ENCODE measurements at regions of chr22 and their contacts with region 1.

Region 1: DNA sequence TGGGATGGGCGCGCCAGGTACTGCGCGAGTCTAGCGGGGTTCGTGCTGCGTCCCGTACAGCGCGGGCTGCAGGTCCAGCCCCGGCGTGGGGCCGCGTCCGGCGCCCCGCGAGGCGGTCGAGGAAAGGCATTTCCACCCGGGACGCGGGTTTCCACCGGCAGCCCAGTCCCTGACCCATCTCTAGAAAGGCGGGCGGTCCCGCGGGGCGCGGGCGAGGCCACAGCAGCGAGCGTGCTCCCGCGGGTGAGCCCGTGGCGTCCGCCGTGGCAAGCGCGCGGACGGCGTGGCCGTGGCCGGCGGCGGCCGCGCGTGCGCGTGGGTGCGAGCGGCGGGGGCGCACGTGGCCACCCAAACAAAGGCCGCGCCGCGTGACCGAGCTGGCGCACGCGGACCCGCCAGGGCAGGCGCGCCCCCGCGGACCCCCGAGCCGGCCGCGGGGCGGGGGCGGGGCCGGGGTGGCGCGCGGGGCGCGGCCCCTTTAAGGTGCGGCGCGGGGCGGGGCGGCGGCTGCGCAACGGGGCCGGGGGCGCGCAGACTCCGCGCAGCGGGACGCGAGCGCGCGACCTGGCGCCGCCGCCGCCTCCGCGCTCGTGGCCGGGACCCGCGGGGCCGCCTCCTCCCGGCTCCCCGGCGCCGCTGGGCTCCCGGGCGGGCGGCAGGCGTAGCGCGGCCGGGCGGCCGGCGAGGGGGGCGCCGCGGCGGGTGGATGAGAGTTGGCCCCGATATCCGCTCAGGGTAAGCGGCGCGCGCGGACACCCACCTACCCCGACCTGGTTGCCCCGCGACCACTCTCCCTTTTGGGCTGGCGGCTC is 39.3 kb upstream of the CELSR1 start:
- DNase-seq: peak; percentile 73
- ATAC-seq: peak; percentile 29

Region 2: DNA sequence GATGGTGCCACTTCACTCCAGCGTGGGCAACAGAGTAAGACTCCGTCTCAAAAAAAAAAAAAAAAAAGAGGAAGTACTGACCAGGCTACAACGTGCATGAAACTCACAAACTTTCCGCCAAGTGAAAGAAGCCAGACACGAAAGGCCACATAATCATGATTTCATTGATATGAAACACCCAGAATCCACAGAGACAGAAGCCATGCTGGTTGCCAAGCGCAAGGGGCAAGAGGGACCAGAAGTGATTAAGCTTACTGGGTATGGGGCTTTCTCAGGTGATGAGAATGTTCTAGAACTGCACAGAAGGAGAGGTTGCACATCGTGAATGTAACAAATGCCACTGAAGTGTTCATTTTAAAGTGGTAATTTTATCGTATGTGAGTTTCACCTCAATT is 100.2 kb before region 1 on chr22:
- intact Hi-C with region 1: no loop called
- DNase-seq: no peak
- ATAC-seq: no peak

Region 3: GRCh38 chr22:46671824-46672432 is 95.2 kb after region 1 on chr22:
- intact Hi-C with region 1: loop called (anchors 2 kb)
- DNase-seq: no peak
- ATAC-seq: no peak

Region 4: GRCh38 chr22:46696229-46696518 is 119.4 kb after region 1 on chr22:
- intact Hi-C with region 1: no loop called
- DNase-seq: no peak
- ATAC-seq: no peak

Region 5: GRCh38 chr22:46714550-46714949 is 137.8 kb after region 1 on chr22:
- intact Hi-C with region 1: no loop called
- DNase-seq: no peak
- ATAC-seq: peak; percentile 45

Measured in sciatic nerve (tissue), 2 donors.